Heart right ventricle (tissue), 16 donors: ENCODE measurements at regions of chr12 and their contacts with region 1.

Region 1: GRCh38 chr12:66144791-66145754 is 14.5 kb upstream of the LLPH start:
- DNase-seq: peak in 1 of 2 donors; percentile 58
- ATAC-seq: peak; percentile 72 to 89 (median 84)
- H3K4me3 ChIP-seq: peak overlapping the region in 1 of 10 donors; percentile 13
- H3K27ac ChIP-seq: peak overlapping the region in 8 of 10 donors; percentile 38 to 83 (median 72)
- H3K4me1 ChIP-seq: peaks cover 0 to 50% (median 26%) of the 10 kb centered on the region in 9 donors
- H3K27me3 ChIP-seq: no peaks in the 10 kb centered on the region
- CTCF ChIP-seq: peak in 8 of 9 donors; percentile 42 to 78 (median 71)

Region 2: GRCh38 chr12:66092559-66093269 is 52.4 kb before region 1 on chr12:
- intact Hi-C with region 1: no loop called
- DNase-seq: no peak
- ATAC-seq: no peak
- H3K4me3 ChIP-seq: no peak overlapping the region
- H3K27ac ChIP-seq: no peak overlapping the region
- H3K4me1 ChIP-seq: peaks cover 0 to 13% (median 0%) of the 10 kb centered on the region in 9 donors
- H3K27me3 ChIP-seq: peaks cover 0 to 3% (median 0%) of the 10 kb centered on the region in 7 donors
- CTCF ChIP-seq: no peak

Region 3: GRCh38 chr12:66235626-66236281 is 90.7 kb after region 1 on chr12:
- intact Hi-C with region 1: loop called in 3 of 10 experiments (anchors 10 kb)
- DNase-seq: no peak
- ATAC-seq: no peak
- H3K4me3 ChIP-seq: peak overlapping the region in 9 of 10 donors; percentile 40 to 67 (median 61)
- H3K27ac ChIP-seq: peak overlapping the region in 7 of 10 donors; percentile 12 to 87 (median 49)
- H3K4me1 ChIP-seq: peaks cover 0 to 67% (median 7%) of the 10 kb centered on the region in 9 donors
- H3K27me3 ChIP-seq: no peaks in the 10 kb centered on the region
- CTCF ChIP-seq: no peak

Region 4: GRCh38 chr12:66241061-66242043 is 96.3 kb after region 1 on chr12:
- intact Hi-C with region 1: loop called in 3 of 10 experiments (anchors 10 kb)
- DNase-seq: no peak
- ATAC-seq: peak in 1 of 8 donors; percentile 75
- H3K4me3 ChIP-seq: no peak overlapping the region
- H3K27ac ChIP-seq: peak overlapping the region in 1 of 10 donors; percentile 79
- H3K4me1 ChIP-seq: peaks cover 0 to 64% (median 0%) of the 10 kb centered on the region in 9 donors
- H3K27me3 ChIP-seq: no peaks in the 10 kb centered on the region
- CTCF ChIP-seq: no peak

Region 5: DNA sequence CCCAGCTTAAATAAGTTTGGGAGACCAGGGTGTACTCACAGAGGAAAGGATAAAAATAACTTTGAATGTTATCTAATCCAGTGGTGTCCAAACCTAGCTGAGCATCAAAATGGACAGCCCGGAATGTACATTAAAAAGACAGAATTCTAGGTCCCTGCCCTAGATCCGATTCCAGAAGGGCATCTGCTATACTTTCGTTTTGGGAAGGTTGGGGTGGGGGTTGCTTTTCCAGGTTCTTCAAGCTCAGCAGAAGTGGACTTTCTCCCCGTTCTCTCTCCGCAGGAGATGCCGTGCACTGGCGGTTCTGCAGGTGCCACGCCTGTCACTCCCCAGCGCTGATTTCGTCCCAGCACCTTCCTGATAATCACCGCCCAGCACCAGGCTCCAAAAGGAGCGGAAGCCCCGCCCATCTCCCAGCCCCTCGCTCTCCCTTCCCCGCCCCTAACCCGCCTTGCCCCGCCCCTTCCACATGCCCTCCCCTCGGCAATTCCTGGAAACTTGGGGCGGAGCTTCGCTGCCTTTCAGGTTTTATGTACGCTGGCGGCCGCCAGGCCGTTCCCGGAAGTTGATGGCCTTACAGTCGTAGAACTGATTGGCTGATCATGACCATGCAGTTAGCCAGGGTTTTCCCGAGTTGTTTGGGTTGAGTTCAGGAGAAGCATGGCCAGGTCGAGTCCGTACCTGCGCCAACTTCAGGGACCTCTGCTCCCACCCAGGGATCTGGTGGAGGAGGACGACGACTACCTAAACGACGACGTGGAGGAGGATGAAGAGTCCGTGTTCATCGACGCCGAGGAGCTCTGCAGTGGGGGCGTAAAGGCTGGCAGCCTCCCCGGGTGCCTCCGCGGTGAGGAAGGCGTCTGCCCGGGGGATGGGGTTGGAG is 157.1 kb after region 1 on chr12 and contains the start of gene HELB:
- intact Hi-C with region 1: loop called in 1 of 10 experiments (anchors 10 kb)
- DNase-seq: peak; percentile 98
- ATAC-seq: peak; percentile 98 to 100 (median 100)
- H3K4me3 ChIP-seq: peak within 1 kb of the TSS; percentile 46 to 79 (median 70)
- H3K27ac ChIP-seq: peak within 1 kb of the TSS in 9 of 10 donors; percentile 43 to 91 (median 85)
- H3K4me1 ChIP-seq: peaks cover 0 to 40% (median 14%) of the 10 kb centered on the region in 9 donors
- H3K27me3 ChIP-seq: peaks cover 0 to 7% (median 0%) of the 10 kb centered on the region in 7 donors
- CTCF ChIP-seq: no peak
- total RNA-seq, gene HELB: 0.47 to 3.6 (median 1.2) TPM

Region 6: GRCh38 chr12:66409195-66409871 is 264.3 kb after region 1 on chr12:
- intact Hi-C with region 1: loop called in 3 of 10 experiments (anchors 5 to 10 kb)
- DNase-seq: peak in 1 of 2 donors; percentile 18
- ATAC-seq: peak in 6 of 8 donors; percentile 31 to 74 (median 48)
- H3K4me3 ChIP-seq: no peak overlapping the region
- H3K27ac ChIP-seq: no peak overlapping the region
- H3K4me1 ChIP-seq: peaks cover 0 to 5% (median 0%) of the 10 kb centered on the region in 9 donors
- H3K27me3 ChIP-seq: peaks cover 0 to 3% (median 0%) of the 10 kb centered on the region in 7 donors
- CTCF ChIP-seq: peak; percentile 34 to 79 (median 74)